Activated T-helper 1 cell treated with anti-CD3 and anti-CD28 coated beads, Interleukin-12 subunit alpha, Interleukin-12 subunit beta, Interleukin-2, Interleukin-4 antibody, amounts not matched to agents 30 ng/mL and 10 ng/mL and 1 ng/mL, durations not matched to agents 14 hours and 24 hours and 36 hours (primary cell): ENCODE measurements at regions of chr2 and their contacts with region 1.

Region 1: DNA sequence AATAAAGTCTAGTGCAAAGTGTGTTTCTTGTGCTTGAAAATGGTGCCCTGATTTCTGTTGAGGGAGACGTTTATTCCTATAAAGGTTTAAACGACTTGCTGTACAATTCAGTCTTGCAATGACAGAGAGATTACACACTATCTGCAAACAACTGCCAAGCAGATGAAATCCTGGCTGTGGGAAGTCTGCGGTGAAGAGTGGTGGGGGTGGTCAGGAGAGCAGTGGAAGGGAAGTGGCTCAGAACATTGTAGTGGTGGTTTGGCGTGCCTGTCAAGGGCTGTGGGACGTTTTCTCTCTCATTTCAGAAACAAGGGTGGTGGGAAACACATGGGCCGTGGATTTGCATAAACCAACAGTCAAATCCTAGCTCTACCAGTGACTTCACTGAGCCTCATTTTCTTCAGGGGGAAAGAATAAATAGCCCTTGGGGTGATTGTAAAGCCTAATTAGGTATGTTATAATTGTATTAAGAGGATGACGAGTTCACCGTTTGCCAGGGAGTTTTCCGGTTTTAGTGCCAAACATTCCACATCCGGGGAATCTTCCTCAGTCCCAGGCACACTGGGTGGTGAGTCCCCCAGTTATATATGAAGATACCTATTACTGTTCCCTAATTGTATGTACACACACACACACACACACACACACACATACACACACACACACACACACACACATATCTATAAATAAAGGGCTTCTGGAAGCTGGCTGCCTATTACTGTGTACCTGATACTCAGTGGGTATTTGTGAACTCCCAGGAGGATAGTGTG is 115.0 kb downstream of the SPTBN1 start:
- DNase-seq: peak; percentile 84
- H3K4me3 Mint-ChIP-seq: peak overlapping the region; percentile 70
- H3K27ac Mint-ChIP-seq: peak overlapping the region; percentile 92
- H3K4me1 Mint-ChIP-seq: peaks cover 91% of the 10 kb centered on the region
- H3K27me3 Mint-ChIP-seq: peaks cover 2% of the 10 kb centered on the region

Region 2: GRCh38 chr2:54115284-54116137 is 455.6 kb before region 1 on chr2 and contains the start of gene ACYP2:
- intact Hi-C with region 1: loop called (anchors 5 kb)
- DNase-seq: peak; percentile 88
- H3K4me3 Mint-ChIP-seq: peak within 1 kb of the TSS; percentile 92
- H3K27ac Mint-ChIP-seq: peak within 1 kb of the TSS; percentile 97
- H3K4me1 Mint-ChIP-seq: peaks cover 14% of the 10 kb centered on the region
- H3K27me3 Mint-ChIP-seq: peaks cover 7% of the 10 kb centered on the region
- total RNA-seq, gene ACYP2: 5.2 and 5.9 TPM in 2 replicates

Region 3: GRCh38 chr2:54558188-54559005 is 12.7 kb before region 1 on chr2:
- intact Hi-C with region 1: loop called (anchors 1 kb)
- DNase-seq: peak; percentile 64
- H3K4me3 Mint-ChIP-seq: peak overlapping the region; percentile 90
- H3K27ac Mint-ChIP-seq: peak overlapping the region; percentile 88
- H3K4me1 Mint-ChIP-seq: peaks cover 89% of the 10 kb centered on the region
- H3K27me3 Mint-ChIP-seq: peaks cover 3% of the 10 kb centered on the region

Region 4: DNA sequence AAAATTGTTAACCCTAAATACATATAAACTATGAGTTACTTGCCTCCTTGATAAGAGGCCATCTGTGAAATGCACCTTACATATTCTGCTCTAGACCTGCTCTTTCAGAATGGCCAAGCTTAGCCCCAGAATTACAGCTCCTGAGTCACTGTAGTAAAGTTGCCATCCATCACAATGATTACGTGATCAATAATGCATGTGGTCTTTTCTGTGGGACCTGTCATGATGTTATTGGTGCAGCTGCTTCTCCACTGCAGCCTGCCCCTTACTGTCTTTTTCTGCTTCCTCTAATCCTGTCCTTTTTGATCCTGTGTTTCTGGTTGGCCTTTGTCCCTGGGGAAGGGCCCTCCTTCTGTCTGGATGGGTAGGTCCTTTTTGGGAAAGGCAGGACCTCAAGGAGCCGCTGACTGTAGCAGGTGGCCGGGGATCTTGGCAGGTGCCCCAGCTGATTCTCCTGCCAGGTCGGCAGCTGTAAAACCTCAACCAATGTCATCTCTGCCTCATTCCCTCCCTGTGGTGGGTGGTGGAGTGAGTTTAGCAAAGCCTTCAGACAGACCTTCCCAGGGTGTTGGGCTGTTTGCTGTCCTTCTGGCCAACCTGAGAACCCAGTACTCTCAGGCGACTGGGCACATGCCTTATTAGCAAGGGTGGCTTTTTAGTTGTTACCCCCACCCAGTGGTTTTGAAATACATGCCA is 26.2 kb after region 1 on chr2:
- intact Hi-C with region 1: loop called (anchors 1 kb)
- DNase-seq: no peak
- H3K4me3 Mint-ChIP-seq: peak overlapping the region; percentile 78
- H3K27ac Mint-ChIP-seq: peak overlapping the region; percentile 99
- H3K4me1 Mint-ChIP-seq: peaks cover 81% of the 10 kb centered on the region
- H3K27me3 Mint-ChIP-seq: no peaks in the 10 kb centered on the region

Region 5: GRCh38 chr2:54680397-54681041 is 109.4 kb after region 1 on chr2:
- intact Hi-C with region 1: loop called (anchors 1 kb)
- DNase-seq: peak; percentile 39
- H3K4me3 Mint-ChIP-seq: peak overlapping the region; percentile 78
- H3K27ac Mint-ChIP-seq: peak overlapping the region; percentile 65
- H3K4me1 Mint-ChIP-seq: peaks cover 59% of the 10 kb centered on the region
- H3K27me3 Mint-ChIP-seq: peaks cover 33% of the 10 kb centered on the region

Region 6: GRCh38 chr2:54750040-54750439 is 178.9 kb after region 1 on chr2:
- intact Hi-C with region 1: no loop called
- DNase-seq: no peak
- H3K4me3 Mint-ChIP-seq: no peak overlapping the region
- H3K27ac Mint-ChIP-seq: no peak overlapping the region
- H3K4me1 Mint-ChIP-seq: no peaks in the 10 kb centered on the region
- H3K27me3 Mint-ChIP-seq: peaks cover 4% of the 10 kb centered on the region